AG04449 (cell line): ENCODE measurements at regions of chr17 and their contacts with region 1.

Region 1: DNA sequence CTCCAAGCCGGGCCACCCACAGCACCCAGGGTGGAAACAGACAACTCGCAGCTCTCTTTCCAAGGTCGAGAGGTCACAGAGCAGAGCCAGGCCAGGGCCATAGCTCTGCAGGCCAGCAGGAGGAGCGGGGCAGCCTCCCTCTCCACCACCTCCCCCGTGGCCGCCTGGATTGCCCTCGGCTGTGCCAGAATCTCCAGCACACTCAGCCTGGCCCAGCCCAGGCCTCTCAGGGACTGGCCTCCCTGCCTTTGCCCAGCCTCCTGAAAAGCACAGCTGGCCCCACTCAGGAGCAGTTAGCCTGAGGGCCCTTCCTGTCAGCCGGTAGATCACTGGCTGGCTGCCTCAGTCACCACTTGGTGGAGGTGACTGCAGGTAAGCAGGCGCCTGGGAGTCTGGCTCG is 85.8 kb upstream of the SEC14L1 start:
- DNase-seq: no peak
- H3K4me3 ChIP-seq: no peak overlapping the region
- CTCF ChIP-seq: no peak

Region 2: GRCh38 chr17:76810956-76811355 is 244.0 kb before region 1 on chr17:
- CTCF ChIA-PET with region 1: interaction called, 12 read pairs
- POLR2A ChIA-PET with region 1: no interaction called
- DNase-seq: no peak
- H3K4me3 ChIP-seq: no peak overlapping the region
- CTCF ChIP-seq: no peak

Region 3: DNA sequence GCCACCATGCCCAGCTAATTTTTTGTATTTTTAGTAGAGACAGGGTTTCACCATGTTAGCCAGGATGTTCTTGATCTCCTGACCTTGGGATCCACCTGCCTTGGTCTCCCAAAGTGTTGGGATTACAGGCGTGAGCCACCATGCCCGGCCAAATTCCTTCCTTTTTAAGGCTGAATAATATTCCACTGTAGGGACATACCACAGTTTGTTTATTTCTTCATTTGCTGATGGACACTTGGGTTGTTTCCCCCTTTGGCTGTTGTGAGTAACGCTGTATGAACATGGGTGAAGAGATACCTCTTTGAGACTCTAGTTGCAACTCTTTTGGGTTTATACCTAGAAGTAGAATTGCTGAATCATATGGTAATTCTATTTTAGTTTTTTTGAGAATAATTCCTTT is 199.8 kb before region 1 on chr17:
- CTCF ChIA-PET with region 1: interaction called, 12 read pairs
- POLR2A ChIA-PET with region 1: no interaction called
- DNase-seq: no peak
- H3K4me3 ChIP-seq: no peak overlapping the region
- CTCF ChIP-seq: no peak

Region 4: DNA sequence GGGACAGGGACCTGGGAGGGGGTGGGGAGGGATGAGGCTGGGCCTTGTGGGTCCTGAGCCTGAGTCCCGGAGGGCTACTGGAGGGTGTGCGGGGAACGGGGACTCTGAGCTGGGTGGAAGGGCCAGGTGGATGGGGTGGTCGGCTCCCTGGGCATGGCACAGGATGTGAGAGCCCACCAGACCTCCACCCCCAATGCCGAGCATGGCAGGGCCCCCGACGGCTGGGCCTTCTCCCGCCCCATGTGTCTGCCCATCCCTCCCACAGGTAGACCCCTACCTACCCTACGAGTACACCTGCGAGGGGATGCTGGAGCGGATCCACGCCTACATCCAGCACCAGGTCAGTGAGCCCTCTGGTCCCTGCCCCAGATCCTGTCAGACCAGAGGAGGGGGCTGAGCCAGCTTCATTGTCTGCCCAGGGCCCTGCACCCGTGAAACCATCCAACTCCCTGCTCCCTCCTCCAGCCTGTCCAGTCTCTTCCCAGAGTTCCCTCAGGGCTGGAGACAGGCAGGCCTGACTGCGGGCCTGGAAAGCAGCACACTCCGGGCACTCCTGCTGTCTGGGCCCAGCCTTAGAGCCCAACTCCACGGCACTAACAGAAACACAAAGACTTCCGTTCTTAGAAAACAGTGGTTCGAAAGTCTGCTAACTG is 108.7 kb before region 1 on chr17:
- CTCF ChIA-PET with region 1: no interaction called
- POLR2A ChIA-PET with region 1: no interaction called
- DNase-seq: no peak
- H3K4me3 ChIP-seq: no peak overlapping the region
- CTCF ChIP-seq: no peak

Region 5: GRCh38 chr17:77011173-77012011 is 43.5 kb before region 1 on chr17:
- CTCF ChIA-PET with region 1: interaction called, 22 read pairs
- POLR2A ChIA-PET with region 1: no interaction called
- DNase-seq: no peak
- H3K4me3 ChIP-seq: no peak overlapping the region
- CTCF ChIP-seq: peak; percentile 33

Region 6: DNA sequence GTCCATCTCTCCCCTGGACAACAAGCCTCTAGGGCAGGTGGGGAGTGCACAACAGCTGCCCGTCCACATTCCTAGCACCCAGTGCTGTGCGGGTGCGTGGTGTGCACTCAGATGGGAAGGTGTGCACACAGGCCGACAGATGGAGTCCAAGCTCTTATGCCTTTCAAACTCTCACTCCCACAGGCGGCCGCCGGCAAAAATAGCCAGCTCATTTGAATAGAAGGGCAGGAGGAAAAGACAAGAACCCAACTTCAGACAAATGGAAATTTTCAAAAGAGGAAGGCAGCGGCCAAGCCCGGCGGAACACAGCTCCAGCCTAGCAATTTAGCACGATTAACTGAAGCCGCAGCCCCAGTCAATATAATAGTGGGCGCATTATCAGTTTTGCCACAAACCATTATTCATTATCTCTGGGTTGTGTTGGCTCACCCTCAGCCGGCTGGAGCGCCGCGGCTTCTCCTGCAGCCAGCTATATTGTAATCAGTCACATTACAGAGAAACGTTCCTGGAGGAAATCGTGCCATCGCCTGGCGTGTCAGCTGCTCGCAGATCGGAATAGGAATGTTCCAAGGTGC is 18.0 kb before region 1 on chr17:
- CTCF ChIA-PET with region 1: interaction called, 34 read pairs
- POLR2A ChIA-PET with region 1: no interaction called
- DNase-seq: no peak
- H3K4me3 ChIP-seq: no peak overlapping the region
- CTCF ChIP-seq: no peak

Region 7: DNA sequence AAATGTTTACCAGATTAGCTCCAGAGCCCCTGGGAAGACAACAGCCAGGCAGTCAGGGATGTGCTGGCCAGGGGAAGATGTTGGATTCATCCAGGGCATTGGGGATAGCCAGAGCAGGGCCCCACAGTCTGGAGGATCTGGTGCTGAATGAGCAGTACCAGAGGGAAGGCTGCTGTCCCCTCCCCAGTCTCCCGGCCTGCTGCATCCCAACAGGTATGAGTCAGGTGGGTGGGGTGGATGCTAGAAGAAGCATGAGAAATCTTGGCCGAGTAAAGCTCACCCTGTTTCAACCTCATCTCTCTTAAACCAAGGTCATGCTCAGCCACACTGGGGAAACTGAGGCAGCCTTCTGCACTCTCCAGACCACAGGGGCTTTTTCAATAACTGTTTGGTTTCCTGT is 14.0 kb after region 1 on chr17:
- CTCF ChIA-PET with region 1: interaction called, 115 read pairs
- POLR2A ChIA-PET with region 1: no interaction called
- DNase-seq: no peak
- H3K4me3 ChIP-seq: no peak overlapping the region
- CTCF ChIP-seq: no peak